Activated CD4-positive, alpha-beta T cell treated with anti-CD3 and anti-CD28 coated beads for 36 hours (primary cell): ENCODE measurements at regions of chr1 and their contacts with region 1.

Region 1: GRCh38 chr1:109548321-109549267 is at the start of gene GNAI3:
- DNase-seq: peak; percentile 97
- ATAC-seq: peak; percentile 97
- H3K4me3 Mint-ChIP-seq: peak within 1 kb of the TSS; percentile 99
- H3K27ac Mint-ChIP-seq: peak within 1 kb of the TSS; percentile 96
- H3K4me1 Mint-ChIP-seq: peaks cover 49% of the 10 kb centered on the region
- H3K27me3 Mint-ChIP-seq: no peaks in the 10 kb centered on the region
- total RNA-seq, gene GNAI3: 7.1 to 9.6 TPM

Region 2: DNA sequence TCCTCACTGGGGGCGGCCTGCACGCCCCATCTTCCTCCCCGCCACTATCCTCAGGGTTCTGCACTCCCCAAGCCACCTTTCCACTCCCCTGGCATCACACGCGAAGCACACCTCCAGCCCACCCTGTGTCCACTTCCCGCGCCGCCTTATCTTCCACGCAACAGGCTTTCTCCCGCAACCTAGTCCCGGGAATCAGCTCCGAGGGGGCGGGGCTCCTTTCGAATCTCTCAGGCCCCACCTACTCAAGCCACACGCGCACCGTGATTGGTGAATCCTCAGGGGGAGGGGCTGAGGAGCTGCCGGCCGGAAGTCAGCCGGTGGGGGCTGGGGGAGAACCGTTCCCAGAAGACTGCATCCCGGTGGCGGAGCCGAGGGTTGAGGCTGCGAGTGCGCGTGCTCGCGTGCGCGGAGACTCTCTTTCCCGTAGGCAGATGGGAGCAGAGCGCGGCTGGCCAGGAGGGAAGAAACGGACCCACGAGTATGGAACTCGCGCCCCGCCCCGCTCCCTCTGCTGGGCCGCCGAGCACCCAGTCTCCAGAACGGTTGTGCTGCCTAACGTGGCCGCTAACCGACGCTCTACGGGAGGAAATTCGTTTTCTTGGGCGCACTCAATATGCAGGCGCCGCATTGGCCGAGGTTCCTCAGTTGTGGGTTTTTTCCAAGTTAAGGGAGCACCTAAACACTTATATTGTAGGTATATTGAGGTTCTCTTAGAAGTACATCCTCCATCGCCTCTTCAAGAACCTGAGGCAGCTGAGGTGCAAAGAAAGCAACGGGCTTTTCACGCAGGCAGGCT is 265.4 kb before region 1 on chr1 and contains the start of gene PSRC1:
- CTCF ChIA-PET with region 1: no interaction called
- POLR2A ChIA-PET with region 1: no interaction called
- intact Hi-C with region 1: loop called in 1 of 2 experiments (anchors 1 kb)
- DNase-seq: peak; percentile 95
- ATAC-seq: peak; percentile 98
- H3K4me3 Mint-ChIP-seq: peak within 1 kb of the TSS; percentile 86
- H3K27ac Mint-ChIP-seq: peak within 1 kb of the TSS; percentile 90
- H3K4me1 Mint-ChIP-seq: peaks cover 11% of the 10 kb centered on the region
- H3K27me3 Mint-ChIP-seq: no peaks in the 10 kb centered on the region
- total RNA-seq, gene PSRC1: 17.6 to 18.4 TPM

Region 3: DNA sequence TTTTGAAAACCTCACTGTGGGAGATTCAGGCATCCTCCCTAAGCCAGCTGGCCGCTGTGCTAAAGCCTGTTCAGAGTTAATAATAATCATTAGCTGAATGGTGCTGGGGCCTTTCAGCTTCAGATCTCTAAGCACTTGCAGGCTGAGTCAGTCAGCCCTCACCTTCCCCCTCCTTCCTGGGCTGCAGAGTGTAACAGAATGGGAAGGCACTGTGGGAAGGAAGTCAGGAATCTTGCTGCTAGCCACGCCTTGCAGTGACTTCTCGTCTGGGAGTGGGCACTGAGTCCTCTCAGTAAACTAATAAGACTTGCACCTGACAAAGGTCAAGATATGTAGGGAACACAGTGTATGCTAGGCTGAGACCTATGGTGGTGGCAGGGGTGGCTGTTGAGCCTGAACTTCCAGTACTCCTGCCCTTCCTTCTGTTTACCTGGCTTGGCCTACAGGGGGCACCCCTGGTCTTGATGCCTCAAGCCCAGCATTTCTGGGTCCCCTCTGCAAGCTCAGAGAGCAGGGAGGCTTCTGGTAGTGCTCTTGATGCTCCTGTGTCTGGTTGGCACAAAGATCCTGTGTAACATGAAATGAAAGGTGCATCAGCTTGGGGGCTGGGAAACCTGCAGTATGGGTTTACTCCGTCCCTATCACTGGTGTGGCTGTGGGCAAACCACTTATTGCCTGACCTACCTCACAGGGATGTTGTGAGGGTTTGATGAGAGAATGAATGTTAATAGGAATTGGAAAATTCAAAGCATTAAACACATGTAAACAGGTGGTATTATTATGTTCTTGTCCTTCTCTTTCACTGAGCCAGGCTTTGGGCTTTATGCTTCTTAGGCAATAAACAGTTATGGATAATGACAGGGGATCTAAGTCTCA is 48.7 kb before region 1 on chr1:
- CTCF ChIA-PET with region 1: interaction called, 16 read pairs
- POLR2A ChIA-PET with region 1: interaction called, 4 read pairs
- intact Hi-C with region 1: no loop called
- DNase-seq: peak; percentile 75
- ATAC-seq: peak; percentile 66
- H3K4me3 Mint-ChIP-seq: no peak overlapping the region
- H3K27ac Mint-ChIP-seq: peak overlapping the region; percentile 67
- H3K4me1 Mint-ChIP-seq: peaks cover 89% of the 10 kb centered on the region
- H3K27me3 Mint-ChIP-seq: no peaks in the 10 kb centered on the region

Region 4: DNA sequence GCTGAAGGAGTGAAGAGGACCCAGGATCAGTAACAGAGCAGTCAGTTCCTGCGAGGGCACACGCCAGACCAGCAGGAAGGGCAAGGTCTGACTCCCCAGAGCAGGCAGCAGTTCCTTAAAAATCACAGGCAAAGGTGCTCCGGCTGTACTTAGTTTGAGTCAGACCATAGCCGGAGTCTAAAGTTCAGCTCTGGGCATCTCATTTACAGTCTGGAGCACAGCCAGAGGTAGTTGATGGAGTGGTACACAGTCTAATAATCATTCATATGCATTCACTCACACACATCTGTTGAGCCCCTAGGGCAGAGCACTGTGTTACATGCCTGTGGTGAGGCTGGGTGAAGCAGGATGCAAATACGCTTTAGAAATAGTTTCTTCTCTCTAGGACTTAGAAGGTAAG is 31.7 kb before region 1 on chr1:
- CTCF ChIA-PET with region 1: no interaction called
- POLR2A ChIA-PET with region 1: no interaction called
- intact Hi-C with region 1: no loop called
- DNase-seq: no peak
- ATAC-seq: no peak
- H3K4me3 Mint-ChIP-seq: no peak overlapping the region
- H3K27ac Mint-ChIP-seq: no peak overlapping the region
- H3K4me1 Mint-ChIP-seq: no peaks in the 10 kb centered on the region
- H3K27me3 Mint-ChIP-seq: no peaks in the 10 kb centered on the region

Region 5: DNA sequence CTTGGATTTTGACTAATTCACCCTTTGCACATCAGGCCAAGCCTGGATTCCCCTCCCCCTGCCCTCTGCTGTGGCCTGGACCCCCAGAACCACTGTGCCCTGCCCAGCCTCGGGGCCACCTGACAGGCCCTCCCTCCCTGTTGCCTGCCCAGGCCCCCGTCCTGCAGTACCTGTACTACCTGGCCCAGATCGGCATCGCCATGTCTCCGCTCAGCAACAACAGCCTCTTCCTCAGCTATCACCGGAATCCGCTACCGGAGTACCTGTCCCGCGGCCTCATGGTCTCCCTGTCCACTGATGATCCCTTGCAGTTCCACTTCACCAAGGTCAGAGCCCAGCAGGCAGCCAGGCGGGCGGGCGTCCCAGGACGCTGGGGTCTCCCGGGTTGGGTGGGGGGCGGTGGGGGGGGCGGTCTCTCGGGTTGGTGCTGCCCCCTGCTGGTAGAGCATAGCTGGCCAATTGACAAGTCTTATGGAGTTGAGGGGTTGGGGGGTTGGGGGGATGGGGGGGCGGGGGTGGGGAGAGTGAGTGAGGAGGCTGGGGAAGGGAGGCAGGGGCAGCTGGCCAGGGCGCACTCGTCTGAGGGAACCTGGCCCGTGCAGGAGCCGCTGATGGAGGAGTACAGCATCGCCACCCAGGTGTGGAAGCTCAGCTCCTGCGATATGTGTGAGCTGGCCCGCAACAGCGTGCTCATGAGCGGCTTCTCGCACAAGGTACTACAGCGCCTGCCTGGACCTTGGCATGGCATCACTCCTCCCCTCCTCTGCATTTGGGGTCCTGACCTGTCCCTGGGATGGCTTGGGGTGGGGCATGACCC is 81.7 kb after region 1 on chr1:
- CTCF ChIA-PET with region 1: interaction called, 190 read pairs
- POLR2A ChIA-PET with region 1: interaction called, 7 read pairs
- intact Hi-C with region 1: loop called (anchors 1 kb)
- DNase-seq: peak; percentile 66
- ATAC-seq: no peak
- H3K4me3 Mint-ChIP-seq: no peak overlapping the region
- H3K27ac Mint-ChIP-seq: no peak overlapping the region
- H3K4me1 Mint-ChIP-seq: peaks cover 14% of the 10 kb centered on the region
- H3K27me3 Mint-ChIP-seq: no peaks in the 10 kb centered on the region

Region 6: DNA sequence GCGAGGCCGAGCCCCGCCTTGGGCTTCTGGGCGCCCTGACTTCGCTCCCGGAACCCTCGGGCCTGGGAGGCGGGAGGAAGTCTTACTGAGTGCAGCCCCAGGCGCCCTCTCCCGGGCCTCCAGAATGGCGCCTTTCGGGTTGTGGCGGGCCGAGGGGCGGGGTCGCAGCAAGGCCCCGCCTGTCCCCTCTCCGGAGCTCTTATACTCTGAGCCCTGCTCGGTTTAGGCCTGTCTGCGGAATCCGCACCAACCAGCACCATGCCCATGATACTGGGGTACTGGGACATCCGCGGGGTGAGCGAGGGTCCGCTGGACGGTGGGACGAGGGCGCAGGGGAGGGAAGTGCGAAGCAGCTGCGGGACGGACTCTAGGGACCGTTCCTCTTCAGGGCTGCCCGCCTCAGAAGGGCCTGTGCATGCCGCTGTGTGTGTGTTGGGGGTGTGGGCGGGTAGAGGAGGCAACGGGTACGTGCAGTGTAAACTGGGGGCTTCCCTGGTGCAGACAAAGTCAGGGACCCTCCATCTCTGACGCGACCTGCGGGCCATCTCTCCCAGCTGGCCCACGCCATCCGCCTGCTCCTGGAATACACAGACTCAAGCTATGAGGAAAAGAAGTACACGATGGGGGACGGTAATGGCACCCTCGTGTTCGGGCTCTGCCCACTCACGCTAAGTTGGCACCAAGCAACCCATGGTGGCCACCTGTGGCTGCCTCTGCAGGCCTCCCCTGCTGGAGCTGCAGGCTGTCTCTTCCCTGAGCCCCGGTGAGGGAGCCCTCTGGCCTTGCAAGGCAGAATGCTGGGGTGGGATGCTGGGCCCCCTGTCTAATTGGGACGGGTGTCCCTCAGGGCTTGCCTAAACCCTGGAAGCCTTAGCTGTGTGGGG is 139.3 kb after region 1 on chr1 and contains the start of gene GSTM1:
- CTCF ChIA-PET with region 1: interaction called, 13 read pairs
- POLR2A ChIA-PET with region 1: interaction called, 9 read pairs
- intact Hi-C with region 1: loop called (anchors 1 kb)
- DNase-seq: peak; percentile 94
- ATAC-seq: peak; percentile 99
- H3K4me3 Mint-ChIP-seq: peak within 1 kb of the TSS; percentile 88
- H3K27ac Mint-ChIP-seq: peak within 1 kb of the TSS; percentile 96
- H3K4me1 Mint-ChIP-seq: peaks cover 20% of the 10 kb centered on the region
- H3K27me3 Mint-ChIP-seq: no peaks in the 10 kb centered on the region
- total RNA-seq, gene GSTM1: 94.0 to 116 TPM

Region 7: DNA sequence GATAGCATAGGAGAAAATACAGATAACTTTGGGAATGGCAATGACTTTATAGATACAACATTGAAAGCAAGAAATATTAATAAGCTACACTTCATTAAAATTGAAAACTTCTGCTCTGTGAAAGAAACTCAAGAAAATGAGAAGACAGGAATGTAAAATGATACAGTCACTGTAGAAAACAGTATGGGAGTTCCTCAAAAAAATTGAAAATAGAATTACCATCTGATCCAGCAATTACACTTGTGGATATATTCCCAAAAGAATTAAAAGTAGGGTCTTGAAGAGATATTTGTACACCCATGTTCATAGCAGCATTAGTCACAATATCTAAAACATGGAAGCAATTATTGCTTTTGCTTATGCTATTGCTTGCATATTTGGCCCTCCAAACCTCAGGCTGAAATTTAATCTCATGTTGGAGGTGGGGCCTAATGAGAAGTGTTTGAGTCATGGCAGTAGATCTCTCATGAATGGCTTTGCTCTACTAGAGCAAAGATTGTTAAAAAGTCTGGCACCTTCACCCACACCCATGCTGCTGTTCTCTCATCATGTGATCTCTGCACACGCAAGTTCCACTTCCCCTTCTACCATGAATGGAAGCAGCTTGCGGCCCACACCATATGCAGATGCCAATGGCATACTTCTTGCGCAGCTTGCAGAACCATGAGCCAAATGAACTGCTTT is 420.7 kb after region 1 on chr1:
- CTCF ChIA-PET with region 1: no interaction called
- POLR2A ChIA-PET with region 1: no interaction called
- intact Hi-C with region 1: no loop called
- DNase-seq: no peak
- ATAC-seq: no peak
- H3K4me3 Mint-ChIP-seq: no peak overlapping the region
- H3K27ac Mint-ChIP-seq: no peak overlapping the region
- H3K4me1 Mint-ChIP-seq: no peaks in the 10 kb centered on the region
- H3K27me3 Mint-ChIP-seq: no peaks in the 10 kb centered on the region

Region 8: DNA sequence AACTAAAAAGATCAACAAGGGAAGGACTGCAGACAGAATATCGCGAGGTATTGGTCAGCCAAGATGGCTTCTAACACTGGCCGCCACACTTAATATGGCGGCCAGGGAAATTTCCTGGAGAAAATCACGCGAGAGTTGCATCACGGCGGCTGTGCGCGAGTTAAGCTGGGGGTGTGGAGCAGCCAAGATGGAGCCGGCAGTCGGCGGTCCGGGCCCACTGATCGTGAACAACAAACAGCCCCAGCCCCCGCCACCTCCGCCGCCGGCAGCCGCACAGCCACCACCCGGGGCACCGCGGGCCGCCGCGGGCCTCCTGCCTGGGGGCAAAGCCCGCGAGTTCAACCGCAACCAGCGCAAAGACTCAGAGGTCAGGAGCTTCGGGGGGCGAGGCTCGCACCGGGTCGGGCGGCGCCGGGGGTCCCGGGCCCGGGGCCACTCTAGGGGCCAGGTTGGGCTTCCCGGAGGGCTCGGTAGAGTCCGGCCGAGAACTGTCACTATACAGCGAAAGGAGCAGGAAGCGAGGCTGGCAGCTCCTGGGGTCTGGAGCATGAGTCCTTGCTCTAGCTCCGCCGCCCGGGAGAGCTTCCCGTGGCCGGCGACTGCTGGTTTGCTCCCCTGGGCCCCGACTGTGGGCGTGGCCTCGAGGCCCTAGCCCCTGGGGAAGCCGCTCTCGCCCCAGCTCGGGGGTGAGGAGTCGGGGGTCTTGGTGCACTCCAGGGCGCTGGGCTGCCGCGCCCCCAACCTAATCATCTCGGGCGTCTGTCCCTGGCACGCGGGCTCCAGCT is 486.0 kb after region 1 on chr1 and contains the start of gene STRIP1:
- CTCF ChIA-PET with region 1: no interaction called
- POLR2A ChIA-PET with region 1: interaction called, 5 read pairs
- intact Hi-C with region 1: loop called in 1 of 2 experiments (anchors 1 kb)
- DNase-seq: peak; percentile 95
- ATAC-seq: peak; percentile 95
- H3K4me3 Mint-ChIP-seq: peak within 1 kb of the TSS; percentile 94
- H3K27ac Mint-ChIP-seq: peak within 1 kb of the TSS; percentile 95
- H3K4me1 Mint-ChIP-seq: peaks cover 47% of the 10 kb centered on the region
- H3K27me3 Mint-ChIP-seq: no peaks in the 10 kb centered on the region
- total RNA-seq, gene STRIP1: 20.7 to 21.5 TPM